WTC11 (cell line): ENCODE measurements at regions of chr2 and their contacts with region 1.

Region 1: GRCh38 chr2:64488050-64488974 is 34.4 kb downstream of the LGALSL start:
- DNase-seq: peak; percentile 91
- ATAC-seq: peak; percentile 82
- H3K4me3 Mint-ChIP-seq: no peak overlapping the region
- H3K27ac Mint-ChIP-seq: no peak overlapping the region
- H3K4me1 Mint-ChIP-seq: peaks cover 31% of the 10 kb centered on the region
- H3K27me3 Mint-ChIP-seq: no peaks in the 10 kb centered on the region
- CTCF ChIP-seq: peak; percentile 94

Region 2: DNA sequence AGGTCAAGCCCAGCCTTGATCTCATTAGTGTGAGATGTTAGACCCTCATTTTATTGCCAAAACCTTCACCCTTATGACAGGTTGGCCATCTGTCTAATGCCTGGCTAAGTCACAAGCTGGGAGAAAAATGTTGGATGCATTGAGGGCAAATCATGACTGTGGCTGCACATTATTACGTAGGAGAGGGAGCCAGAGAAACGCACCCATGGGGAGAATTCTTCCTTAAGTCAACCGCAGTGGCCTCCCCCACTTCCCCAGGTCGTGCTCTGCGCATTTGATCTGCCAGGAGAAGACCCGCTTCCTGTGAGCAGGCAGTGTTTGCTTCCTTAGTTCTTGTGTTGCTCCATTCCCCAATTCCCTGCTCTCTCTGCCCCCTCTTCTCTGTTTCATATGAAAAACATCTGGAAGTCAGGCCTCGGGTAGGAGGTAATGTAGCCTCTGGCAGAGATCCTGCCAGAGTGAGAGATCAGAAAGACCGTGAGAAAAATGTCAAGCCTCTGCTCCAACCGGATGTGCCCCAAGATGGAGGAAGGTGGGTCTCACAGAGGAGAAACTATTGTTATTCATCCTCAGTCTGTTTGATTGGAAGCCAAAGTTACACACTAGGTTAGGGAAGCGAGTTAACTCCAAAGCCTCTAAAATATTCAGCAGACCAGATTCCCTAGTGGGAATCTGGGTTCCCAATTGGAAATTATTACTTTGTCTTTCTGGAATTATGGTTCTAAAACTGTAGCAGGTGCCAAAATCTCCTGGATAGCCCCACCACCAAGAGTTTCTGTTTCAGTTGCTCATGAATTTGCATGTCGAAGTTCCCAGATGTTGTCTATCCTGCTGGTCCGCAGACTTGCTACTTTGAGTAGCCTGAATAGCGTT is 199.8 kb before region 1 on chr2:
- CTCF ChIA-PET with region 1: no interaction called
- POLR2A ChIA-PET with region 1: no interaction called
- DNase-seq: no peak
- ATAC-seq: peak; percentile 58
- H3K4me3 Mint-ChIP-seq: no peak overlapping the region
- H3K27ac Mint-ChIP-seq: peak overlapping the region; percentile 84
- H3K4me1 Mint-ChIP-seq: peaks cover 37% of the 10 kb centered on the region
- H3K27me3 Mint-ChIP-seq: peaks cover 3% of the 10 kb centered on the region; the same call in 1 of the 2 replicates
- CTCF ChIP-seq: no peak

Region 3: GRCh38 chr2:64359892-64360657 is 128.2 kb before region 1 on chr2:
- CTCF ChIA-PET with region 1: interaction called, 15 read pairs
- POLR2A ChIA-PET with region 1: no interaction called
- DNase-seq: peak; percentile 22
- ATAC-seq: peak; percentile 57
- H3K4me3 Mint-ChIP-seq: no peak overlapping the region
- H3K27ac Mint-ChIP-seq: no peak overlapping the region
- H3K4me1 Mint-ChIP-seq: peaks cover 35% of the 10 kb centered on the region
- H3K27me3 Mint-ChIP-seq: no peaks in the 10 kb centered on the region; the same call in none of the 2 replicates
- CTCF ChIP-seq: no peak

Region 4: GRCh38 chr2:64442801-64443429 is 45.4 kb before region 1 on chr2:
- CTCF ChIA-PET with region 1: interaction called, 12 read pairs
- POLR2A ChIA-PET with region 1: no interaction called
- DNase-seq: peak; percentile 26
- ATAC-seq: peak; percentile 94
- H3K4me3 Mint-ChIP-seq: no peak overlapping the region
- H3K27ac Mint-ChIP-seq: no peak overlapping the region
- H3K4me1 Mint-ChIP-seq: peaks cover 20% of the 10 kb centered on the region
- H3K27me3 Mint-ChIP-seq: no peaks in the 10 kb centered on the region
- CTCF ChIP-seq: no peak

Region 5: GRCh38 chr2:64474121-64474571 is 14.2 kb before region 1 on chr2:
- CTCF ChIA-PET with region 1: interaction called, 32 read pairs
- POLR2A ChIA-PET with region 1: interaction called, 3 read pairs
- DNase-seq: no peak
- ATAC-seq: peak; percentile 54
- H3K4me3 Mint-ChIP-seq: no peak overlapping the region
- H3K27ac Mint-ChIP-seq: peak overlapping the region; percentile 81
- H3K4me1 Mint-ChIP-seq: peaks cover 32% of the 10 kb centered on the region
- H3K27me3 Mint-ChIP-seq: no peaks in the 10 kb centered on the region
- CTCF ChIP-seq: no peak

Region 6: DNA sequence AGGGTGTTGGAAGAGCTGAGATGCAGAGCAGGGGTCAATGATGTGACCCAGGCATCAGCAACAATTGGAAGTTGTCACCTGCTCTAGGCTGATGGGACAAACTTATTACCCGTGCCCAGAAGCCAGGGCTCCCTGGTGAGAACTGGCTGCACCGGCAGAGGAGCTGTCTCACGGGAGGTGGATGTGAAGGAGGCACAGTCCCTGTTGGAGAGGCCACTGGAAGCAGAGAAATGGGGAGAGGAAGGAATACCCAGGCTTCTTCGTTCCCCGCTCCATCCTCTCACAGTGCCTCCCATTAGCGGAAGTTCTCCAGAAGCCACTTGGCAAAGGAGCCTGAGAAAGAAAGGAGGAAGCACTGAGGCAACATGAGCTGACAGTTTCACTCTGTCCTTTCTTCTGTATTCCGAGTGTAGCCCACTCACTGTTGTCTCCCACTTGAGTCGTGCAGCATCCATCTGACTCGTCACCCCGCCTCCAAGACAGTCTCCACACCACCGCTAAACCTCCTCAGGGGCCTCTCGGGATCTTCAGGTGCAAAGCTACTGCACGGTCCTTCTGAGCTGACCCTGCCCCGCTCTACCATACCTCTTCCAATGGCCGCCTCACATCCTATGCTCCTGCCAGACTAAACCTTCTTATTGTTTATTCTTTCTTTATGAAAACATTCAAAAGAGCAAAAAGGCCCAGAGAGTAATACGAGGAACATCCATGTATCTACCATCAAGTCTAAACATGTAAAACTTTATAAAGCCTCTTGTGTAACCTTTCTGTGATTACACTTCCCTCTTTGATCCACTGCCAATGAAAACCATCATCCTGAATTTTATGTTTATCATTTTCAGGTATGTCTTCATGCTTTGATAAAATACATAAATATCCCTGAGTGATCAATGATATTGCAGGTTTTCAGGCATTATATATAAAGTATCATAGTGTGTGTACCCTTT is 16.7 kb after region 1 on chr2:
- CTCF ChIA-PET with region 1: interaction called, 14 read pairs
- POLR2A ChIA-PET with region 1: no interaction called
- DNase-seq: no peak
- ATAC-seq: no peak
- H3K4me3 Mint-ChIP-seq: no peak overlapping the region
- H3K27ac Mint-ChIP-seq: no peak overlapping the region
- H3K4me1 Mint-ChIP-seq: no peaks in the 10 kb centered on the region
- H3K27me3 Mint-ChIP-seq: no peaks in the 10 kb centered on the region
- CTCF ChIP-seq: no peak

Region 7: GRCh38 chr2:64523666-64524603 is 35.6 kb after region 1 on chr2 and contains the start of gene AFTPH:
- CTCF ChIA-PET with region 1: interaction called, 11 read pairs
- POLR2A ChIA-PET with region 1: no interaction called
- DNase-seq: peak; percentile 98
- ATAC-seq: peak; percentile 95
- H3K4me3 Mint-ChIP-seq: peak within 1 kb of the TSS; percentile 100
- H3K27ac Mint-ChIP-seq: peak within 1 kb of the TSS; percentile 98
- H3K4me1 Mint-ChIP-seq: peaks cover 18% of the 10 kb centered on the region
- H3K27me3 Mint-ChIP-seq: no peaks in the 10 kb centered on the region
- CTCF ChIP-seq: no peak
- total RNA-seq, gene AFTPH: 14.9 to 16.3 TPM (median 15.0 TPM) in 3 replicates